ENCODE measurements at regions of chr15 and their contacts with region 1.

Region 1: DNA sequence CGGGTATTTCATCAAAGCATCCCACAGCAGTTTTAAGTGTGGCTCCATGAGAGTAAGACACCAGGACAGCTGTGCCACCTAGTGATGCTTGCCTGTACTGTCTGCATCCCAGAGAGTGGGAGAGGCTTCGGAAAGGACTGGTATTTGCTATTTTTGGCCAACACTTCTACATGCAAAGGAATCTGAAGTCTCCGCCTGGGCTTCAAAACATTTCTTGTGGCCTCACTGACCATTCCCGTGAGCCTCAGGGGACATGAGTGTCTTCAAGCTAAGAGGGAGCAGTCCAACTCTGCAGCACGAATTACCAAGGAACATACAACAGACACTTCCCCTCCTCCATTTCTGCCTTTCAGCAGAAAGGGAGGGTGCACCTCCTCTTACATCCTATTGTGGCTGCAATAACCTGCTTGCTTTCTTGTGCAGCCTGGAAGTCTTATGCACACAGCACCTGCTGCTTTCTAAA is 177.5 kb downstream of the RORA start:
- DNase-seq: peak; percentile 58
- H3K4me3 Mint-ChIP-seq: no peak overlapping the region
- H3K27ac Mint-ChIP-seq: no peak overlapping the region
- H3K4me1 Mint-ChIP-seq: peaks cover 23% of the 10 kb centered on the region
- H3K27me3 Mint-ChIP-seq: no peaks in the 10 kb centered on the region
- CTCF ChIP-seq: peak; percentile 56

Region 2: GRCh38 chr15:61063875-61064320 is 12.3 kb after region 1 on chr15:
- CTCF ChIA-PET with region 1: interaction called, 12 read pairs
- POLR2A ChIA-PET with region 1: interaction called, 6 read pairs
- intact Hi-C with region 1: no loop called
- DNase-seq: peak; percentile 70
- H3K4me3 Mint-ChIP-seq: no peak overlapping the region
- H3K27ac Mint-ChIP-seq: no peak overlapping the region
- H3K4me1 Mint-ChIP-seq: peaks cover 7% of the 10 kb centered on the region
- H3K27me3 Mint-ChIP-seq: peaks cover 13% of the 10 kb centered on the region
- CTCF ChIP-seq: no peak